ENCODE measurements at regions of chr6 and their contacts with region 1.

Region 1: DNA sequence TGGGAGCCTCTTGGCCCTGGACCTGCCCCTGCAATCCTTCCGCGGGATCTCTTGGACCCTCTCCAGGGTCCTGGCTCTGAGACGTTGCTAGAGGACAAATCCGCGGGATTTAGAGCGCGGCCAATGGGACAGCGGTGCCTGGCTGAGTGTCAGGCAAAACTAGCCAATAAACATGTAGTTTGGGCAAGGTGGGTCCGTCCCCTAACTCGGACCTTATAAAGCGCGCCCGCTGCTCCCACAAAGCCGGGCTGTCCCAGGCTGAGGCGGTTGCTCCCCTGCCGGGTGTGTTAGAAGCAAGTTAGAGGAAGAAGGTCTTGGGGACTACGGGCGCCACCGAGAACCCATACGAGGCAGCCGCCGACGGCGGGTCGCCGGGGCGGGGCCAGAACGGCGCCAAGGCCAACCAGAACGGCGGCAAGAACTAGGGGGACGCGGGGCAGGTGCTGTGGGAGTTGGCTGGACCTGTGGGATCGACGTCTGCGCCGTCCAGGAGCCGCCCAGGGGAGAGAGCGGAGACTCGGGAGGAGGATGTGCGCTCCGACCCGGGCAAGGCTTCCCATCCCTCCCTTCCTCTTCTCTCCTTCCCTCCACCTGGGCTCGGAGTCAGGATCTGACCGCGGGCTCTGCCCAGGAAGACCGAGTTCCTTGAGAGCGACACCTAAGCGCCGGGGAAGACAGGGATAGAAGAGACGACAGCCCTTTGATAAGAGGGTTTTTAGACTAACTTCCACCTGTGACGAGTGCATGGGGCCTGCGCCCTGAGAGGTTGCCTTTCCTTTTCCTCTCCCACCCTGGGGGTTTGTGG is 6.5 kb upstream of the TMEM14A start:
- DNase-seq: peak; percentile 91 to 92
- ATAC-seq: peak; percentile 97 to 99 (median 99)
- H3K4me3 ChIP-seq: peak overlapping the region; percentile 24 to 83 (median 71)
- H3K27ac ChIP-seq: peak overlapping the region in 9 of 10 donors; percentile 43 to 80 (median 74)
- H3K4me1 ChIP-seq: peaks cover 0 to 21% (median 8%) of the 10 kb centered on the region in 9 donors
- H3K27me3 ChIP-seq: peaks cover 0 to 19% (median 0%) of the 10 kb centered on the region in 7 donors
- CTCF ChIP-seq: no peak

Region 2: GRCh38 chr6:52497652-52498408 is 166.6 kb before region 1 on chr6:
- intact Hi-C with region 1: loop called in 2 of 10 experiments (anchors 10 kb)
- DNase-seq: peak in 1 of 2 donors; percentile 75
- ATAC-seq: peak in 6 of 8 donors; percentile 20 to 55 (median 36)
- H3K4me3 ChIP-seq: no peak overlapping the region
- H3K27ac ChIP-seq: peak overlapping the region in 9 of 10 donors; percentile 76 to 90 (median 86)
- H3K4me1 ChIP-seq: peaks cover 13 to 63% (median 42%) of the 10 kb centered on the region in 9 donors
- H3K27me3 ChIP-seq: no peaks in the 10 kb centered on the region
- CTCF ChIP-seq: no peak

Region 3: GRCh38 chr6:52517502-52518278 is 146.7 kb before region 1 on chr6:
- intact Hi-C with region 1: loop called in 1 of 10 experiments (anchors 10 kb)
- DNase-seq: peak; percentile 81 to 91
- ATAC-seq: peak; percentile 93 to 97 (median 94)
- H3K4me3 ChIP-seq: peak overlapping the region in 1 of 10 donors; percentile 14
- H3K27ac ChIP-seq: peak overlapping the region; percentile 79 to 94 (median 89)
- H3K4me1 ChIP-seq: peaks cover 26 to 87% (median 47%) of the 10 kb centered on the region in 9 donors
- H3K27me3 ChIP-seq: no peaks in the 10 kb centered on the region
- CTCF ChIP-seq: no peak

Region 4: GRCh38 chr6:52610745-52611355 is 53.5 kb before region 1 on chr6:
- intact Hi-C with region 1: no loop called
- DNase-seq: no peak
- ATAC-seq: no peak
- H3K4me3 ChIP-seq: no peak overlapping the region
- H3K27ac ChIP-seq: no peak overlapping the region
- H3K4me1 ChIP-seq: peaks cover 0 to 7% (median 0%) of the 10 kb centered on the region in 9 donors
- H3K27me3 ChIP-seq: peaks cover 0 to 2% (median 0%) of the 10 kb centered on the region in 7 donors
- CTCF ChIP-seq: no peak